Cardiac septum (tissue), 1 donor: ENCODE measurements at regions of chr1 and their contacts with region 1.

Region 1: DNA sequence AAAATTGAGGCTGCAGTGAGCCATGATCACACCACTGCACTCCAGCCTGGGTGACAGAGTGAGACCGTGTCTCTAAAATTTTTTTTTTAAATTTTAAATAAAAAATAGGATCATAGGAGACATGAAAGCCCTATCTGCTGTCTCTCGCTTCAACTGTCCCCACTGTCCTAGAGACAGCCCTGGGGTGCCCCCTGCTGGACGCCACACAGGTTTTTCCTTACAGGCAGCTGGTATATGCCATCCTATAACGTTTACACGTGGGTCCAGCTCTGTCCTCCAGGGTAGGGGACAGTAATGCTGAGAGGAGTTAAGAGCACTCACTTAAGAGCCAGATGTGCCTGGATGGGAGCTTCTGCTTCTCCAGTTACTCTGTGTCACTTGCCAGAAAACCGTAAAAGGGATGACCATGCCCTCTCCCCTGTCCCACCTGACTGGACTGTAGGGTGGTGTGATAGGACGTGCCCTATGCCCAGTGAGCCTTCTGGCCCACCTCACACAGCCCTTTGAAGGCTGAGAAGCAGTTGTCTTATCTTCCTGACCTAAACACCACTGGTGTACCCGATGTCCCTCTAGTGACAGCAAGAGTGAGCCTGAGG is 8.5 kb downstream of the FBXO2 start:
- DNase-seq: peak; percentile 90

Region 2: GRCh38 chr1:11037740-11038182 is 608.0 kb before region 1 on chr1:
- intact Hi-C with region 1: loop called (anchors 1 kb)
- DNase-seq: peak; percentile 93

Region 3: GRCh38 chr1:11337580-11338073 is 308.1 kb before region 1 on chr1:
- intact Hi-C with region 1: loop called (anchors 1 kb)
- DNase-seq: no peak

Region 4: DNA sequence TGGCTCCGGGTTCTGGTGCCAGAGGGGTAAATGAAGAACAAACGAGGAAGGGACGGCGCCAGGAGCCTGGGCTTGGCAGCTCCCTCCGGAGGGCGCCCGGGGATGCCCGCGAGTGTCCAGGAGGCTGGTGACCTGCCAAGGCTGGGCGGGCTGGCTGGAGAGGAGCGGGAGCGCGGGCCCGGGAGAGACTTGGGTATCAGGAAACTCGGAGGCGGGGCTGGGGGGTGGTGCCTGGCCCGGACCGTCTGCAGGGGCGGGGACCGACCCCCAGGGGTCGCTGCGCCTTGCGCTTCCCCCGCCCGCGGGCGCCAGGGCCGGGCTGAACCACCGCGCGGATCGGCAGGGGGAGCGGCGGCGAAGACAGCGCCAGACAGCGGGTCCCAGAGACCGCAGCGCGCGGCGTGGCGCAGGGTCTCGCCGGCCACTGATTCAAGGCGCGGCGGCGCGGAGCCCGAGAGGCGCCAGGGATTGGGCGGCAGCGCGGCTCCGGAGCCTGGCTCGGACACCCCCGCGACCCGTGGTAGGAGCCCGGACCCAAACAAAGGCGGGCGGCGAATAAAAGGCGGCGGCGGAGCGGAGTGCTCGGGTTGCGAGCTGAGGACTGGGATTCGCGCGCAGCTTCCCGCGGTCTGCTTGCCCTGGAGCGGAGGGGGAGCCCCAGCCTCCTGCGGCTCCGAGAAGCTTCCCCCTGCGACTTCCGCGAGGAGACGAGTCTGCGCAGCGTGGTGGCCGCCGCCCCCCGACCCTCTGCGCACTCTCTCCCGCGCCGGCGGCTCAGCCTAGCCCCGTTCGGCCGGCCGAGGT is 167.0 kb before region 1 on chr1 and contains the start of gene DISP3:
- intact Hi-C with region 1: loop called (anchors 2 kb)
- DNase-seq: no peak
- total RNA-seq, gene DISP3: 0.05 TPM

Region 5: DNA sequence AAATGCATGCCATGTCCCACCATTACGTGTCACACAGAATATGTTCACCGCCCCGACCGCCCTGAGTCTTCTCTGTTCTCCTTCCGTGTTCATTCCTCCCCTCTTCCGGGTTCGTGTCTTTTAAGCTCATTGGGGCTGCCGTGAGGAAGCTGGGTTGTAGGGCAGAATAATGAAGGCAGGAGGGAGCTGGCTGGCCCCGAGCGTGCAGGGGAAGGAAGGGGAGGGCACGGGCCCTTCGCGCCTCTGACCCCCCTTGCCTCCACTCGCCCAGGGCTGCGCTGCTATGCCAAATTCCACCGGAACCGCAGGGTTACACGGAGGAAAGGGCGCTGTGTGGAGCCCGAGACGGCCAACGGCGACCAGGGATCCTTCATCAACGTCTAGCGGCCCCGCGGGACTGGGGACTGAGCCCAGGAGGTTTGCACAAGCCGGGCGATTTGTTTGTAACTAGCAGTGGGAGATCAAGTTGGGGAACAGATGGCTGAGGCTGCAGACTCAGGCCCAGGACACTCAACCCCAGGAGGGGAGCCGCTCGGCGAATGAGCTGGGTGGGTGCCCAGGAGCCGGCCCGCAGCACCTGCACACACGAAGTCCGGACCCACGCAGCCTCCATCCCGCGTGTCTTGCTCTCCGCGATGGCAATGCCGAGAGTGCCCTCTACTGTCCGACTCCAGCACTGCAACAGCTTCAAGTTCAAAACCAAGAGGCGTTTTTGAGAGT is 73.7 kb after region 1 on chr1:
- intact Hi-C with region 1: loop called (anchors 1 kb)
- DNase-seq: peak; percentile 93